ENCODE measurements at regions of chr11 and their contacts with region 1.

Region 1: DNA sequence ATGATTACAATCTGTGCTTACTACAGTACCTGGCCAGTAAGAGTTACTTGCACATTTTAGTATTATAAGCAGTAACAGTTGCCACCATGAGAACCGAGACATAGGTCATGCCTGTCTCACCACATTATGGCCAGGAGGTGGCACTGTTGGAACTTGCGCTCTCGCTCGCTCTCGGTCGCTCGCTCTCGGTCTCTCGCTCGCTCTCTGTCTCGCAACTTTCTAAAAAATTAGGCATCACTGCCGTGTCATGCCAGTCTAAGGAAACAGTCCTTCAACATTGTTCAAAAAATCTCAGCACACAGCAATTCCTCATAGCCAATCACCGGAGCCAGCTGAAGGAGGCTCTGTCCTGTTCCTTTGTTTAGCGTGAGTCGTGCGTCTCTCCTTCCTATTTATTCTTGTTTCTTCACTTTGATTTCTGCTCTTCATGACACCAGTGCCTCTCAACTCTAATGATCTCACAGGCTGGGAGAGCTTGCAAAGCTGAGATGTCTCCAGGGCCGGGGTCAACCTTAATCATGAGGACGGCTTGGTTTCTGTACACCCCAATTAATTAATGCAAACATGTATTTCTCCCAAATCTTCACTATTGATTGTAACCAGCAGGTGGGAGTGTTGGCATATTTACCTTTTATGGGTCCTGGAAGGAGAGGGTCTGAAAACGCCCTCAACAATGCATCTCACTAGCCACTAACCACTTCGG is 6.3 kb upstream of the ADAMTS8 start:
- DNase-seq: no peak
- H3K4me3 ChIP-seq: peak overlapping the region; percentile 42 to 71 (median 60)
- H3K27ac ChIP-seq: peak overlapping the region; percentile 54 to 82 (median 76)
- H3K4me1 ChIP-seq: peaks cover 0 to 23% (median 12%) of the 10 kb centered on the region in 3 donors
- H3K27me3 ChIP-seq: peaks cover 0 to 19% (median 2%) of the 10 kb centered on the region in 4 donors
- CTCF ChIP-seq: peak; percentile 73 to 89 (median 83)
- POLR2A ChIP-seq: no peak

Region 2: DNA sequence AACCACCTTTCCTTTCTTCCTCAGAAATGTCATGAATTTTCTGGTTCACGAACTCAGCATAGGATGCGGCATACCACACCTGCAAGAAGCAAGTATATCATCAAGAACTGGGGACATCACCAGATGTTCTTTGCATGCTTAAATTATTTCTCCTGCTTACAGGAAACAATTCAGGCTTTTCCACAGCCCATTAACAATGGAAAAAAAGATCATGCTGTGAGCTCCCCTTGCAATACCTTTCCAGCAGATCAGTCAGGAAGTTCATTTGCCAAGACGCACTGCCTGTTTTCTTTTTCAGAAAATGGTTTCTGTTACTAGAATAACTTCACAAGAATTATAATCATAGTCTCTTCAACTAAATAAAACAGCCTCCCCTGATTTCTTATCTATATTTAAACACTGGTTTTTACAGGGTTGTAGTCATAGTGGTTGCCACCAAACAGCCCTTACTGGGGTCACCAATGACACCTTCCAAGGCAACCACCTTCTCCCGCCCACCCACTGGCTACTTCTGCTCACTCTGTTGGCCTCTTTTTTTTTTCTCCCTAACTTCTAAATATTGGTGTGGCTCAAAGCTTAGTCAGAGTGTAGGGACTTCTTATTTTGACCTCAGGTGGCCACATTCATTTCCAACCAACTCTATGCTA is 497.0 kb before region 1 on chr11:
- intact Hi-C with region 1: no loop called
- DNase-seq: no peak
- H3K4me3 ChIP-seq: no peak overlapping the region
- H3K27ac ChIP-seq: no peak overlapping the region
- H3K4me1 ChIP-seq: peaks cover 0 to 7% (median 0%) of the 10 kb centered on the region in 3 donors
- H3K27me3 ChIP-seq: no peaks in the 10 kb centered on the region
- CTCF ChIP-seq: no peak
- POLR2A ChIP-seq: no peak

Region 3: GRCh38 chr11:130861902-130862860 is 427.5 kb after region 1 on chr11:
- intact Hi-C with region 1: loop called (anchors 5 kb)
- DNase-seq: peak; percentile 49
- H3K4me3 ChIP-seq: no peak overlapping the region
- H3K27ac ChIP-seq: peak overlapping the region in 3 of 4 donors; percentile 7 to 56 (median 39)
- H3K4me1 ChIP-seq: peaks cover 0 to 24% (median 7%) of the 10 kb centered on the region in 3 donors
- H3K27me3 ChIP-seq: no peaks in the 10 kb centered on the region
- CTCF ChIP-seq: peak; percentile 99 to 100 (median 100)
- POLR2A ChIP-seq: no peak

Region 4: DNA sequence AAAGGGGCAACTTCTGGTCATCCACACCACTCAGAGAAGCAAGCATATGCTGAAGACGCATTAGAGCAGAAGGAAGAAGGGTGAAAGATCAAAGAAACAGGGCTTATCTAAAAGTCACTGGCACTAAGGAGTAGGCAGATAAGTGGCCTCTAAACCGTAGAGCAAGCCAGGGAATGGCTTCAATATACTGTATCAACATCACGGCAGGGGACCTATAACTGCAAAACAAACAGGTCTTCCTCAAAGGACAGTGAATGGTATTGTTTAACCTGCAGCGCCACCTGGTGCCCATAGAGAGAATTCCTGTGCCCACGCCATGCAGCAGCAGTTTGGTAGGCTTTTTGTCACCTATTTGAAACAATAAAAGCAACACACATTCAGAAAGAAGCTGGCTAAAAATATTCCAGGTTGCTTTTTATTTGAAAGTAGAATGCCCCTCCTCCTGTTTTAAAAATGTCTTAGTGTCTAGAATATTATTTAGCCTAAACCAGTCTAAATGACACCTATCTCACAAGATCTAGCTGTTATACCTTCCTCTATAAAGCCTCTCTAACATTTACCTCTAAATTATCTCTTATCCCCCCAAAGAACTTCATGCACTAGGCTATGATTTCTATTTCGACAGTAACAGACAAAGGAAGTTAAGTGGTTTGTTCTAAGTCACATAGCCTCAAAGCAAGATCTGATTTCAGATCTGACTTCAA is 459.8 kb after region 1 on chr11:
- intact Hi-C with region 1: loop called (anchors 10 kb)
- DNase-seq: no peak
- H3K4me3 ChIP-seq: no peak overlapping the region
- H3K27ac ChIP-seq: peak overlapping the region in 3 of 4 donors; percentile 2 to 76 (median 18)
- H3K4me1 ChIP-seq: peaks cover 0 to 71% (median 18%) of the 10 kb centered on the region in 3 donors
- H3K27me3 ChIP-seq: no peaks in the 10 kb centered on the region
- CTCF ChIP-seq: peak; percentile 67 to 89 (median 85)
- POLR2A ChIP-seq: no peak

Measured in esophagus squamous epithelium (tissue), 5 donors.